Activated CD4-positive, alpha-beta T cell treated with anti-CD3 and anti-CD28 coated beads for 36 hours (primary cell): ENCODE measurements at regions of chr22 and their contacts with region 1.

Region 1: GRCh38 chr22:31749636-31750364 is at the start of gene PRR14L:
- DNase-seq: peak; percentile 100
- ATAC-seq: peak; percentile 71
- H3K4me3 Mint-ChIP-seq: peak within 1 kb of the TSS; percentile 89
- H3K27ac Mint-ChIP-seq: peak within 1 kb of the TSS; percentile 93
- H3K4me1 Mint-ChIP-seq: peaks cover 43% of the 10 kb centered on the region
- H3K27me3 Mint-ChIP-seq: no peaks in the 10 kb centered on the region
- total RNA-seq, gene PRR14L: 48.2 to 52.2 TPM

Region 2: DNA sequence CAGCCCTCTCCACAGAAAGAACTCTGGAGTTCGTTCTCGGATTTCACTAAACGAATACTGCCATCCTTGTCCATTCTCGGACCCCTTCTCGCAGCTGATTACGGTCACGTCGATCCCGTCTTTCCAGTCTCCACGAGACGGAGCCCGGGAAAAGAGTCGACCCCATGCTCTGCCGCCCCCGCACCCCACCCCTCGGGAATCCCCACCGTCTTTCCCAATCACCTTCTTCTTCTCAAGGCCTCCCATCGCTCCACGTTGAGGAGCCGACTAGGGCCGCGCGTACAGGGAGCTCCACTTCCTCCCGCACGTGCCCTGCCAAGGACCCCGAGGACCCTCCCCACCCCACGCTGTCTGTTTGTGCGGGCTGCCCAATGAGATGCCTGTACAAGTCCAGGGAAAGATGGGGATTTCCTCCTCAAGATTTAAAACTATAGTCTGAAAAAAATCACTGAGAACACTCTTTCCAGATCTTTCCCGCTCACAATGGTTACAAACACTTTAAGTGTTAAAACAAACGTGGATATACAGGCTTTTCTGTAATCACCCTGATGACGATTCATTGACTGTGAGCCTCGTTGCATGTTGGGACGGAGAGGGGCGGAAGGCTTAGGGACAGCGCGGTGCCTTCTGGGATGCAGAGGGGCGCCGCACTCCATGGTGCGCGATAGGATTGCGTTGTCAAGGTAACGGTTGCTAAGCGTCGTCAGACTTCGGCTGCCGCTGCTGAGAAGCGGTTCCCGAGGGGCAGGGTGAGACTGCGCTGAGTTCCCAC is 1158.0 kb before region 1 on chr22 and contains the start of gene PES1:
- CTCF ChIA-PET with region 1: no interaction called
- POLR2A ChIA-PET with region 1: no interaction called
- intact Hi-C with region 1: loop called in 1 of 2 experiments (anchors 5 kb)
- DNase-seq: peak; percentile 96
- ATAC-seq: peak; percentile 100
- H3K4me3 Mint-ChIP-seq: no peak within 1 kb of the TSS
- H3K27ac Mint-ChIP-seq: no peak within 1 kb of the TSS
- H3K4me1 Mint-ChIP-seq: no peaks in the 10 kb centered on the region
- H3K27me3 Mint-ChIP-seq: peaks cover 4% of the 10 kb centered on the region
- total RNA-seq, gene PES1: 134 to 137 TPM

Region 3: GRCh38 chr22:31211862-31212730 is 537.7 kb before region 1 on chr22 and contains the start of gene LIMK2:
- CTCF ChIA-PET with region 1: no interaction called
- POLR2A ChIA-PET with region 1: no interaction called
- intact Hi-C with region 1: loop called in 1 of 2 experiments (anchors 2 kb)
- DNase-seq: peak; percentile 99
- ATAC-seq: peak; percentile 97
- H3K4me3 Mint-ChIP-seq: peak within 1 kb of the TSS; percentile 85
- H3K27ac Mint-ChIP-seq: peak within 1 kb of the TSS; percentile 92
- H3K4me1 Mint-ChIP-seq: peaks cover 45% of the 10 kb centered on the region
- H3K27me3 Mint-ChIP-seq: no peaks in the 10 kb centered on the region
- total RNA-seq, gene LIMK2: 31.8 to 34.4 TPM

Region 4: GRCh38 chr22:31489604-31490495 is 259.9 kb before region 1 on chr22 and contains the start of gene EIF4ENIF1:
- CTCF ChIA-PET with region 1: no interaction called
- POLR2A ChIA-PET with region 1: no interaction called
- intact Hi-C with region 1: loop called in 1 of 2 experiments (anchors 2 kb)
- DNase-seq: peak; percentile 92
- ATAC-seq: peak; percentile 75
- H3K4me3 Mint-ChIP-seq: peak within 1 kb of the TSS; percentile 86
- H3K27ac Mint-ChIP-seq: peak within 1 kb of the TSS; percentile 99
- H3K4me1 Mint-ChIP-seq: peaks cover 46% of the 10 kb centered on the region
- H3K27me3 Mint-ChIP-seq: no peaks in the 10 kb centered on the region
- total RNA-seq, gene EIF4ENIF1: 45.4 to 75.0 TPM

Region 5: DNA sequence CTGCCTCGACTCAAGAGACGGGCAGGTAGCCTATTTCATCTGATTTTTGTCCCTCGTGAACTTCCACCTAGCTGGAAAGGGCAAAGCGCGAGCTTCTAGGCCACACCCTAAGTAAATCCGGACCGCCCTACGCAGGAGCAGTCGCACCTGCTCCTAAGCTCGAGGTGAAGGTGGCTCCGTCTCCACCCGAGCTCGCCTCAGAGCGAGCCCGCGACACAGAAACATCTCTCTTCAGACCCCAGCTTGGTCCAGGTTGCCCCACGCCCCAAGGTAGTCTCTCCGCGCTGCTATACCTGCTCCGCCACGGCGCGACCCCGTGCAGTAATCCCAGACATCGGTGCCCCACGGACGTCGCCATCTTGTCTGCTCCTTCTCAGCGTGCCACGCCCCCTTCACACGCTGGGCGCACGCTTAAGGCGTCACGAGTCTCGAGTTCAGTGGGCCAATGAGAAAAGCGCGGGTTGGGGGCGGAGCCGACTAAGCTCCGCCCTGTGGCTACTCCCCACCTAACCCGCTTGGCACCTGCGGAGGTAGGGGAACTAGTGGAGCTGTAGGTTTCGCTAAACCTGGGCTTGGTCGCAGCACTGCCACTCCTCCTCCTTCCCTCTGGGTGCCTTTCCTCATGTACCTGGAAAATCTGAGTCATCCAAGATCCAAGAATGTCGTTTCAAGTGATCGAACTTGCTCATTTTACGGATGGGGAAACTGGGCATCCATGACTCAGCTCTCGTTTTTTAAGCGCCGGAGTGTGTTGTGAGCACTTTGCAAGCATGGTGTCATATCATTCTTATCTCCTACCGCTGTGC is 87.7 kb before region 1 on chr22 and contains the start of gene PISD:
- CTCF ChIA-PET with region 1: interaction called, 4 read pairs
- POLR2A ChIA-PET with region 1: interaction called, 9 read pairs
- intact Hi-C with region 1: loop called (anchors 1 kb)
- DNase-seq: peak; percentile 98
- ATAC-seq: peak; percentile 89
- H3K4me3 Mint-ChIP-seq: peak within 1 kb of the TSS; percentile 84
- H3K27ac Mint-ChIP-seq: peak within 1 kb of the TSS; percentile 94
- H3K4me1 Mint-ChIP-seq: peaks cover 30% of the 10 kb centered on the region
- H3K27me3 Mint-ChIP-seq: peaks cover 2% of the 10 kb centered on the region
- total RNA-seq, gene PISD: 30.3 to 37.9 TPM

Region 6: GRCh38 chr22:31776231-31776630 is 26.4 kb after region 1 on chr22:
- CTCF ChIA-PET with region 1: no interaction called
- POLR2A ChIA-PET with region 1: no interaction called
- intact Hi-C with region 1: no loop called
- DNase-seq: no peak
- ATAC-seq: no peak
- H3K4me3 Mint-ChIP-seq: no peak overlapping the region
- H3K27ac Mint-ChIP-seq: no peak overlapping the region
- H3K4me1 Mint-ChIP-seq: no peaks in the 10 kb centered on the region
- H3K27me3 Mint-ChIP-seq: no peaks in the 10 kb centered on the region

Region 7: GRCh38 chr22:31943976-31944699 is 194.3 kb after region 1 on chr22 and contains the start of gene YWHAH:
- CTCF ChIA-PET with region 1: no interaction called
- POLR2A ChIA-PET with region 1: no interaction called
- intact Hi-C with region 1: loop called (anchors 1 to 5 kb)
- DNase-seq: peak; percentile 96
- ATAC-seq: peak; percentile 73
- H3K4me3 Mint-ChIP-seq: no peak within 1 kb of the TSS
- H3K27ac Mint-ChIP-seq: peak within 1 kb of the TSS; percentile 84
- H3K4me1 Mint-ChIP-seq: peaks cover 21% of the 10 kb centered on the region
- H3K27me3 Mint-ChIP-seq: no peaks in the 10 kb centered on the region
- total RNA-seq, gene YWHAH: 83.2 to 98.5 TPM

Region 8: DNA sequence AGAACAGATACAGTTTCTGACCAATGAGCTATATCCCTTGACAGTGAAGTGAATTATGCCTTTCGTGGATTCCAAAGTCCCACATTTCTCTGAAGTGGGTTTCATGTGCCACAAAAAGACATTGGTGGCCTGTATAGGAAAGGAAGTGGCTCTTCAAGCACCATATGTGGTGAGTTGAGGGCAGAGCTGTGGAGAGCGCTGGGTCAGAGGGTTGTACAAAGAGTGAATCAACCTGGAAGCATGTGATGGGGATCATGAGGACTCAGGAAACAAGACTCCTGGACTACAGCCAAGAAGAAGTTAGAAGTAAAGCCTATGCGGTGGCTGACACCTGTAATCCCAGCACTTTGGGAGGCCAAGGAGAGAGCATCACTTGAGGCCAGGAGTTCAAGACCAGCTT is 505.9 kb after region 1 on chr22:
- CTCF ChIA-PET with region 1: no interaction called
- POLR2A ChIA-PET with region 1: no interaction called
- intact Hi-C with region 1: no loop called
- DNase-seq: no peak
- ATAC-seq: no peak
- H3K4me3 Mint-ChIP-seq: no peak overlapping the region
- H3K27ac Mint-ChIP-seq: no peak overlapping the region
- H3K4me1 Mint-ChIP-seq: no peaks in the 10 kb centered on the region
- H3K27me3 Mint-ChIP-seq: peaks cover 14% of the 10 kb centered on the region

Region 9: GRCh38 chr22:32474635-32475467 is 725.1 kb after region 1 on chr22 and contains the start of gene FBXO7:
- CTCF ChIA-PET with region 1: no interaction called
- POLR2A ChIA-PET with region 1: no interaction called
- intact Hi-C with region 1: loop called in 1 of 2 experiments (anchors 2 kb)
- DNase-seq: peak; percentile 93
- ATAC-seq: peak; percentile 83
- H3K4me3 Mint-ChIP-seq: peak within 1 kb of the TSS; percentile 90
- H3K27ac Mint-ChIP-seq: peak within 1 kb of the TSS; percentile 98
- H3K4me1 Mint-ChIP-seq: peaks cover 21% of the 10 kb centered on the region
- H3K27me3 Mint-ChIP-seq: no peaks in the 10 kb centered on the region
- total RNA-seq, gene FBXO7: 81.3 to 85.6 TPM